MCF 10A (cell line): ENCODE measurements at regions of chr7 and their contacts with region 1.

Region 1: DNA sequence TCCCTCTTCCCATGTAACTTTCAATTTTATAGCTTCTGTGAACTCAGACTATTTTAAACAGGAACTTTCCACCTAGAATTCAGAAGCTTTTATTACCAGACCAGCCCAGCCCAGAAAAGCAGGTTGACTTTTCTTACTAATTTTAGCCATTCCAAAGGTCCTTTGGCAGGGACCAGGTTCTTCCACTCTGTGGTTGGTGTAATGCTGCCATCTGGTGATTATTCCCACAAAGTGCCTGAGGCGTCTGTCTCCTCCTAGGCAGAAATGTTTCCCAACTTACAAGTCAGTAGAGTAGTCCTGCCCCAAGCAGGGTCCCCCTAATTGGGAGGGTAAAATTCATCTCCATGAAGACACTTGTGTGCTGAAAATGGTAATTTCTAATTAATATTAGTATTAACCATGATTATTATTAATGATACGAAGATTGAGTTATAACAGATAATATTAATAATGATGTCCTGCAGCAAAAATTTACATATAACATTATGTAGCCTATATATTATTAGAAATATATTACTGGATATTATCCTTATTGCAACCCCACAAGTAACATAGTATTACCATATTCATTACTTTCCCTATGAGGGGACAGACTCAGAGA is 53.0 kb upstream of the PPP1R17 start:
- DNase-seq: peak; percentile 67
- H3K4me3 Mint-ChIP-seq: no peak overlapping the region
- H3K27ac Mint-ChIP-seq: no peak overlapping the region
- H3K4me1 Mint-ChIP-seq: no peaks in the 10 kb centered on the region
- H3K27me3 Mint-ChIP-seq: no peaks in the 10 kb centered on the region
- CTCF ChIP-seq: peak; percentile 76

Region 2: DNA sequence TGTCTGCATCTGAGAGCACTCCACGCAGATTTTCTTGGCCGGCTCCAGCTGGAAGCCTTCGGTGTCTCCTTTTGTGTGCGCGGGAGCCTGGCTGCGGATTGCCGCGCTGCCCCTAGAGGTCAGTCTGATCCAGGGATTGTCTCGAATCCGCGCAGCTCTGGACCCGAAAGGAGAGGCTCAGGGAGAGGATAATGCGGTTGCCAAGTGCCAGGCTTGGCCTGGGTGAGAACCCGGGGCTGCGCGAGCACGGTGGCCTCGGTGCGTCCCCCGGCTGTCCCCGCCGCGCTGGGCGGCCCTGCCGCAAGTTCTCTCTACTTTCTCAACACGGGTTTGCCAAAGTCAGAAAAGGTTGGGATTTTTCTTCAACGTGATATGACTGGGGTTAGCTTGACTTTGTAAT is 441.0 kb before region 1 on chr7:
- CTCF ChIA-PET with region 1: interaction called, 44 read pairs
- POLR2A ChIA-PET with region 1: no interaction called
- intact Hi-C with region 1: loop called (anchors 1 kb)
- DNase-seq: peak; percentile 64
- H3K4me3 Mint-ChIP-seq: no peak overlapping the region
- H3K27ac Mint-ChIP-seq: no peak overlapping the region
- H3K4me1 Mint-ChIP-seq: no peaks in the 10 kb centered on the region
- H3K27me3 Mint-ChIP-seq: peaks cover 22% of the 10 kb centered on the region
- CTCF ChIP-seq: peak; percentile 67

Region 3: GRCh38 chr7:31448649-31449048 is 185.3 kb before region 1 on chr7:
- CTCF ChIA-PET with region 1: interaction called, 50 read pairs
- POLR2A ChIA-PET with region 1: no interaction called
- intact Hi-C with region 1: loop called (anchors 1 kb)
- DNase-seq: no peak
- H3K4me3 Mint-ChIP-seq: no peak overlapping the region
- H3K27ac Mint-ChIP-seq: no peak overlapping the region
- H3K4me1 Mint-ChIP-seq: no peaks in the 10 kb centered on the region
- H3K27me3 Mint-ChIP-seq: peaks cover 37% of the 10 kb centered on the region
- CTCF ChIP-seq: no peak

Region 4: DNA sequence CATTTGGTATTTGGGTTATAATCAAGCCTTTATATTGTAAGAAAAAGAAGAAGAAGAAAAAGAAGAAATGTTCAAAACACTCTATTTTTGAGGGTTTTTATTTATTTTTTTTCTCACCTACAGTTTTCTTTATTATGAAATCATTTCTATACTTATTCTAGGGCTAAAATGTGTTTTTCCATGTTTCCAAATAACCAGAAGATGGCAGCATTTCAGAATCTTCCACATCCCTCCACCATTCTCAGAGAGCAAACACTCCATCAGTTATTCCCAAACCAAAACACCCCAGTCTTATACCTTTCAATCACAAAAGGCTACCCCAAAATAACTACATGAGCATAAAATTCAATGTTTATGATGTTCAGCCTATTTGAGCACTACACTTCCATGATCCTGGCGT is 14.3 kb after region 1 on chr7:
- CTCF ChIA-PET with region 1: interaction called, 20 read pairs
- POLR2A ChIA-PET with region 1: no interaction called
- intact Hi-C with region 1: no loop called
- DNase-seq: peak; percentile 5
- H3K4me3 Mint-ChIP-seq: no peak overlapping the region
- H3K27ac Mint-ChIP-seq: no peak overlapping the region
- H3K4me1 Mint-ChIP-seq: no peaks in the 10 kb centered on the region
- H3K27me3 Mint-ChIP-seq: peaks cover under 1% of the 10 kb centered on the region
- CTCF ChIP-seq: peak; percentile 20

Region 5: DNA sequence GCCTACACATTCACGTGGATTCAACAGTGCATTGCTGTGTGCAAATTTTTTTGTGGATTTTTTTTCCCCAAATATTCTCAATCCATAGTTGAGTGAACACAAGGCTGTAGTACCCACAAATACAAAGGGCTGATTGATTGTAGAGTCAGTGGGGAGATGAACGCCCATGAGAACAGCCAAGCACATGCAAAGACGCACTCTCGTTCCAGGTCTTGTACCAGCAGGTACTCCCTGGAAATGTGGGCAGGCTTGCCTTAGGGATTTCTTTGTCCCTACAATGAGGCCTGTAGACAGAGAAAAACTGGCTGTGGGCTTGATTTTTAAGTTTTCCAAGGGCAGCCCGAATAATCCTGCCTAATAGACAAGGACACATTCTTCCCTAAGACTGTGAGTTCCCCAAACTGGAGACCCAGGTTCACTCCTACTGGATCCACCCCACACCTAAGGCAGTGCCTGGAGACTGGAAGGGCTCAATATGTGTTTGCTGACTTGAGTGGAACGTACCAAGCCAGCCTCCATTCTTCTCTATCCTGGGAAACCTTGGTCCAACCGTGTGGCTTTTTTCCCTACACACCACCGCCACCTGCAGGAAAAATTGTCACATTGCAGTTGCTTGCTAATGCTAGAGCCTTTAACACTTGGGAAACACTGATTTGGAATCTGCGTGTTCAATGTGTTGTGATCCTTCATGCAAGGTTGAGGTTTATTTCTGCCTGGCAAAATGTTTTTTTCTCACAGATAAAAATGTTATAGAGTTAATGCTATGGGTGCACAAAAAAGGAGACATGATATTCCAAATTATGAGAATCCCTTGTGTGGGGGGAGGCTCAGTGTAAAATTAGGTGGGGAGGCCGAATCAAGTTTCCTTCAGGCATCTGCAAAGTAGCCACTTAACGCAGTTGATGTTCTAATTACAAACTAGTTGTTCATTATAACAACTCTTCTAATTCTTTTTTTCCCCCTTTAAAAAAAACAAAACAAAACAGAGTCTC is 102.3 kb after region 1 on chr7:
- CTCF ChIA-PET with region 1: interaction called, 6 read pairs
- POLR2A ChIA-PET with region 1: no interaction called
- intact Hi-C with region 1: loop called (anchors 5 kb)
- DNase-seq: peak; percentile 81
- H3K4me3 Mint-ChIP-seq: no peak overlapping the region
- H3K27ac Mint-ChIP-seq: no peak overlapping the region
- H3K4me1 Mint-ChIP-seq: peaks cover 6% of the 10 kb centered on the region
- H3K27me3 Mint-ChIP-seq: peaks cover 24% of the 10 kb centered on the region
- CTCF ChIP-seq: peak; percentile 86

Region 6: DNA sequence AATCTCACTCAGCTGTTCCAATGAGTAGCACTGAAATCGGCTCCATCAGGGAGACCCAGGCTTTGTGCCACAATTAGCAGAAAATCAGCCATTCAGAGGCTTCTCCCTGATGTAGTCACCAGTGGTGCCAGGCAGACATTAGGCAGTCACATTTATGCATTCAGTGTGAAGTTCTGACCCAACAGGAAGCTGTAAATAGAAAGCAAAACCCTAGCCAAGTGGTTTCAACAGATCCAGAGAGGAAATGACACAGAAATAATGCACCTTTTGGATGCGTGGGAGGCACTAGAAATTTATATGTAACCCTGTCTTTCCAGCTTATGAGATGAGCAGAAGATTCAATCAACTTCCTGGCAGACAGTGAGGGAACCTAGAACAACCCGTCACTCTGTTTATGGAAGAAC is 249.8 kb after region 1 on chr7:
- CTCF ChIA-PET with region 1: no interaction called
- POLR2A ChIA-PET with region 1: no interaction called
- intact Hi-C with region 1: no loop called
- DNase-seq: peak; percentile 79
- H3K4me3 Mint-ChIP-seq: peak overlapping the region; percentile 2
- H3K27ac Mint-ChIP-seq: peak overlapping the region; percentile 55
- H3K4me1 Mint-ChIP-seq: peaks cover 21% of the 10 kb centered on the region
- H3K27me3 Mint-ChIP-seq: no peaks in the 10 kb centered on the region
- CTCF ChIP-seq: no peak